MCF 10A (cell line): ENCODE measurements at regions of chr1 and their contacts with region 1.

Region 1: GRCh38 chr1:167533851-167534300 is 15.5 kb upstream of the CD247 start:
- DNase-seq: peak; percentile 90
- H3K4me3 Mint-ChIP-seq: no peak overlapping the region
- H3K27ac Mint-ChIP-seq: no peak overlapping the region
- H3K4me1 Mint-ChIP-seq: peaks cover 5% of the 10 kb centered on the region
- H3K27me3 Mint-ChIP-seq: no peaks in the 10 kb centered on the region
- CTCF ChIP-seq: peak; percentile 97

Region 2: GRCh38 chr1:167066333-167067122 is 467.3 kb before region 1 on chr1:
- CTCF ChIA-PET with region 1: interaction called, 29 read pairs
- POLR2A ChIA-PET with region 1: no interaction called
- intact Hi-C with region 1: loop called (anchors 1 kb)
- DNase-seq: peak; percentile 84
- H3K4me3 Mint-ChIP-seq: peak overlapping the region; percentile 32
- H3K27ac Mint-ChIP-seq: peak overlapping the region; percentile 43
- H3K4me1 Mint-ChIP-seq: no peaks in the 10 kb centered on the region
- H3K27me3 Mint-ChIP-seq: peaks cover 18% of the 10 kb centered on the region
- CTCF ChIP-seq: peak; percentile 100

Region 3: GRCh38 chr1:167263819-167264464 is 269.9 kb before region 1 on chr1:
- CTCF ChIA-PET with region 1: interaction called, 90 read pairs
- POLR2A ChIA-PET with region 1: interaction called, 10 read pairs
- intact Hi-C with region 1: loop called (anchors 1 kb)
- DNase-seq: no peak
- H3K4me3 Mint-ChIP-seq: no peak overlapping the region
- H3K27ac Mint-ChIP-seq: no peak overlapping the region
- H3K4me1 Mint-ChIP-seq: peaks cover 4% of the 10 kb centered on the region
- H3K27me3 Mint-ChIP-seq: no peaks in the 10 kb centered on the region
- CTCF ChIP-seq: no peak

Region 4: GRCh38 chr1:167409183-167409582 is 124.7 kb before region 1 on chr1:
- CTCF ChIA-PET with region 1: interaction called, 84 read pairs
- POLR2A ChIA-PET with region 1: no interaction called
- intact Hi-C with region 1: no loop called
- DNase-seq: peak; percentile 48
- H3K4me3 Mint-ChIP-seq: no peak overlapping the region
- H3K27ac Mint-ChIP-seq: no peak overlapping the region
- H3K4me1 Mint-ChIP-seq: peaks cover 6% of the 10 kb centered on the region
- H3K27me3 Mint-ChIP-seq: no peaks in the 10 kb centered on the region
- CTCF ChIP-seq: peak; percentile 19

Region 5: GRCh38 chr1:167454894-167455785 is 78.7 kb before region 1 on chr1:
- CTCF ChIA-PET with region 1: interaction called, 46 read pairs
- POLR2A ChIA-PET with region 1: interaction called, 13 read pairs
- intact Hi-C with region 1: no loop called
- DNase-seq: peak; percentile 57
- H3K4me3 Mint-ChIP-seq: peak overlapping the region; percentile 71
- H3K27ac Mint-ChIP-seq: no peak overlapping the region
- H3K4me1 Mint-ChIP-seq: no peaks in the 10 kb centered on the region
- H3K27me3 Mint-ChIP-seq: no peaks in the 10 kb centered on the region
- CTCF ChIP-seq: no peak

Region 6: GRCh38 chr1:167504467-167504827 is 29.4 kb before region 1 on chr1:
- CTCF ChIA-PET with region 1: interaction called, 19 read pairs
- POLR2A ChIA-PET with region 1: no interaction called
- intact Hi-C with region 1: no loop called
- DNase-seq: no peak
- H3K4me3 Mint-ChIP-seq: no peak overlapping the region
- H3K27ac Mint-ChIP-seq: no peak overlapping the region
- H3K4me1 Mint-ChIP-seq: no peaks in the 10 kb centered on the region
- H3K27me3 Mint-ChIP-seq: peaks cover 29% of the 10 kb centered on the region
- CTCF ChIP-seq: no peak

Region 7: DNA sequence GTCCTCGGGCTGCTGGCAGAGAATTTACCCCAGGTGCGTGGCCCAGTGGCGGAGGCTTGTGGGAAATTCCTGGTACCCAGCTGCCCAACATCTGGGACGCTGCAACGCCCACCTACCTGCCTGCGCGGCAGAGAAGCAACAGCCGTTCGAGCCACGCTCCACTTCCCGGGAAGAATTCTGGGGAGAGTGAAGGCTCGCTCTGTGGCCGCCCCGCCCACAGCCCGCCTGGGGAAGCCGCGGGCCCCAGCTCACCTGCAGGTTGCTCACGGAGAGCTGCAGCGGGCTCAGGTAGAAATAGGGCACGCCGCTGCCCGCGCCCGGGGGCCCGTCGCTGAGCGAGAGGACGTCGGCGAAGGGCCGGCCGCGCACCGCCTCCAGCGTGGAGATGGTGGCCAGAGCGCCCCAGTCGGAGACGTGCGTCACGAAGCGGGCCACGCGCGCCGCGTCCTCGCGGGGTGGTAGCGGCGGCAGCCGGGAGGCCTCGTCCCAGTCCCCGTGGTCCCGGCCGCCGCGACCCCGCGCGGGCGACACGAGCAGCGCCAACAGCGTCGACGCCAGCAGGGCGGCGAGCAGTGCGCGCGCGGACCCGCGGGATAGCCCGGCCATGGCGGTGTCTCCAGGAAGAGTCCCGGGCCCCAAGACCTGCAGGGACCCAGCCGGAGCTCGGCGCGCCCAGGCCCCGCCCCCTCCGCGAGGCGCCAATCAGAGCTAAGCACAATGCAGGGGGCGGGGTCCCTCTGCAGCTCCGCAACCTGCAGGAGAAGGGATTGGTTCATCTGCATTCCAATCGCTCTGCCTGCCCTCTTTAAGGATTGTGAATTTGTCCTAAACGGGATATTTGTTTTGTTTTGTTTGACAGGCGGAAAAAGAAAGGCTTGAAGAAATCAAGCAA is 19.5 kb after region 1 on chr1 and contains the start of gene CREG1:
- CTCF ChIA-PET with region 1: interaction called, 69 read pairs
- POLR2A ChIA-PET with region 1: interaction called, 26 read pairs
- intact Hi-C with region 1: no loop called
- DNase-seq: peak; percentile 98
- H3K4me3 Mint-ChIP-seq: peak within 1 kb of the TSS; percentile 87
- H3K27ac Mint-ChIP-seq: peak within 1 kb of the TSS; percentile 36
- H3K4me1 Mint-ChIP-seq: peaks cover 59% of the 10 kb centered on the region
- H3K27me3 Mint-ChIP-seq: no peaks in the 10 kb centered on the region
- CTCF ChIP-seq: no peak
- total RNA-seq, gene CREG1: 136 and 154 TPM in 2 replicates

Region 8: GRCh38 chr1:167708940-167709389 is 175.1 kb after region 1 on chr1:
- CTCF ChIA-PET with region 1: no interaction called
- POLR2A ChIA-PET with region 1: no interaction called
- intact Hi-C with region 1: no loop called
- DNase-seq: no peak
- H3K4me3 Mint-ChIP-seq: no peak overlapping the region
- H3K27ac Mint-ChIP-seq: no peak overlapping the region
- H3K4me1 Mint-ChIP-seq: peaks cover 8% of the 10 kb centered on the region
- H3K27me3 Mint-ChIP-seq: peaks cover 6% of the 10 kb centered on the region
- CTCF ChIP-seq: no peak

Region 9: GRCh38 chr1:168082008-168082876 is 548.4 kb after region 1 on chr1:
- CTCF ChIA-PET with region 1: no interaction called
- POLR2A ChIA-PET with region 1: no interaction called
- intact Hi-C with region 1: no loop called
- DNase-seq: peak; percentile 88
- H3K4me3 Mint-ChIP-seq: no peak overlapping the region
- H3K27ac Mint-ChIP-seq: peak overlapping the region; percentile 82
- H3K4me1 Mint-ChIP-seq: peaks cover 28% of the 10 kb centered on the region
- H3K27me3 Mint-ChIP-seq: no peaks in the 10 kb centered on the region
- CTCF ChIP-seq: peak; percentile 95